Activated CD4-positive, alpha-beta T cell treated with anti-CD3 and anti-CD28 coated beads, Interleukin-2, amount 10 ng/mL, durations not matched to agents 7 days and 5 days (primary cell): ENCODE measurements at regions of chr2 and their contacts with region 1.

Region 1: DNA sequence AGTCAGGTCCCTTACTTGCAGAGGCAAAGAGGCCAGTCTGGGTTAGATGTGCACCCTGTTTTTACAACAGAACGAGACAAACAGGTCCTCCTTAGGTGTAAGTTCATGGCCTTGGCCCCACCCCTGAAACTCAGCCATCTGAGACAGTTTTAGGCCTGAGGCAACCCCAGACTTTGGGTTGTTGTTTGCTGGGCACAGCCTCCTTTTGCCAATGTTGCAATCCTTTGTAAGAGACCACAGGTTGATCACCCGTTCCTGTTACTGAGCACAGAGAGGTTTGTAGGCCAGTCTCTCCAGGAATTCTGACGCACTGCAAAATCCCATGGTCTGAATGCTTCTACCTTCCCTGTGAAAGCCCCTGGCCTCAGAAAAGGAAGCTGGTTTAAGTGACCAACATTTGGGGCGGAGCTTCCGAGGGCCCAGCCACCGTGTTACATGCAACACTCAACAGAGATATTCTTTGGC is 15.5 kb upstream of the IL1RN start:
- DNase-seq: no peak
- H3K4me3 Mint-ChIP-seq: no peak overlapping the region
- H3K27ac Mint-ChIP-seq: no peak overlapping the region
- H3K4me1 Mint-ChIP-seq: peaks cover 5% of the 10 kb centered on the region
- H3K27me3 Mint-ChIP-seq: peaks cover 7% of the 10 kb centered on the region

Region 2: DNA sequence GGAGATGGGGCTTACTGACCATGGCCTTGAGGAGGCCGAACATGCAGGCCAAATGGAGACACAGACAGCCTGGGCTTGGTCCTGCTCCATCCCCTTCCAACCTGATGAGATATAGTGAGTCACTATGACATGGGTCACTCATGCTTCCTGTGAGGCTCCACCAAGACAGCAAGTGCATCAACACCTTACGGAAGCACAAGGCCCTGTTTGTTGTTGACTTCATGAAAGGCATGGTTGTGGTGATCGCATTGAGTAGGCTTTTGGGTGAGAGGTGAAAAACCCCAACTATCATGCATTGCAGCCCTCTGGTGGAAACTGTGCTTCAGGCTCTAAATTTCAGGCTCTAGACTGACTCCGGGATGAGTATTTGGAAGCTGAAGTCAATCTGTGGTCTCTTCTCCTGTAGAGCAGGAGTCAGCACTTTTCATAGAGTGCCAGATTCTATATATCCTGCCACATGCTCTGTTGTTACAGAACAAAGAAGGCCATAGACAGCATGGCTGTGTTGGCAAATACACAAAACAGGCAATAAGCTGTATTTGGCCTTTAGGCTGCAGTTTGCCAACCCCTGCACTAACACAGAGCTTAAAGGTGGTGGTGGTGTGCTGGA is 190.8 kb before region 1 on chr2:
- CTCF ChIA-PET with region 1: no interaction called
- POLR2A ChIA-PET with region 1: no interaction called
- DNase-seq: no peak
- H3K4me3 Mint-ChIP-seq: no peak overlapping the region
- H3K27ac Mint-ChIP-seq: no peak overlapping the region
- H3K4me1 Mint-ChIP-seq: peaks cover 10% of the 10 kb centered on the region
- H3K27me3 Mint-ChIP-seq: peaks cover 1% of the 10 kb centered on the region

Region 3: GRCh38 chr2:113124181-113124961 is 12.5 kb after region 1 on chr2:
- CTCF ChIA-PET with region 1: interaction called, 13 read pairs
- POLR2A ChIA-PET with region 1: no interaction called
- DNase-seq: no peak
- H3K4me3 Mint-ChIP-seq: no peak overlapping the region
- H3K27ac Mint-ChIP-seq: peak overlapping the region; percentile 19
- H3K4me1 Mint-ChIP-seq: peaks cover 20% of the 10 kb centered on the region
- H3K27me3 Mint-ChIP-seq: peaks cover 18% of the 10 kb centered on the region